Activated naive CD4-positive, alpha-beta T cell treated with anti-CD3 and anti-CD28 coated beads for 36 hours (primary cell): ENCODE measurements at regions of chr1 and their contacts with region 1.

Region 1: DNA sequence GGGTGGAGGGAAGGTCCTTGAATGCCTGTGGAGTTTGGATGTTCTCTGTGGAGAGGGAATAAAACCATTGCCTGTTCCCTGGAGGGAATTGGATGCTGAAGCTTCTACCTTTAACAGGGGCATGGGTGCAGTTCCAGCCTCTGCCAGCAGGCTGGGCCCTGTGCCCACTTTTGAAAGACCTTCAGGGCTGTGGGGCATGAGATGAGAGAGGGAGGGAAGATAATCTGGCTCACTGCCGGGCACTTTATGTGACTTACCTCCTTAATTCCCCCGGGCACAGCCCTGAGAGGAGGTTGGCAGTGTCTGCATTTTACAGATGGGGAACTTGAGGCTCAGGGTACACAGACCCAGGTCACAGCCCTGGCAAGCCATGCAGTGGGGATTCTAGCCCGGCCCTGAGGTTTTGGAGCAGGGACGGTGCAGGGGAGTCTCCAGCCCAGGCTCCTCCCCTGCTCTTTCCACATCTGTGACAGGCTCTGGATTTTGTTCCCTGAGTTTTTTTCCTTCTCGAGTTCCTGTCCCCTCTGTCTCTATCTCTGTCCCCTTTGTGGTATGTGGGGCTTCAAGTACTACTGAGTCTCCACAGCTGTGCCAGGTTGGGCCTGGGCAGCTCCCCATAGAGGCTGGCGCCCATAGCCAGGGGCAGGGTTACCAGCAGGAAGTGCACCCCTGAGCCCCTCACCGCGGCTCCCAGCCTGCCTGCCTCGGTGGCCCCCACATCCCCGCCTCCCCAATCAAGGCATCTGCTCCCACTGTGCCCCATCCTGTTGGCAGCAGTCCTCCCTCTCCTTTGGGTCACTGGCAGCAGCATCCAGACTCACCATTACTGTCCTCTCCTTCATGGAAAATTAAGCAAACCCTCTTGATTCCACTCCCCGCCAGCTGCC is 14.0 kb upstream of the THEMIS2 start:
- DNase-seq: peak; percentile 93
- H3K4me3 Mint-ChIP-seq: no peak overlapping the region
- H3K27ac Mint-ChIP-seq: no peak overlapping the region
- H3K4me1 Mint-ChIP-seq: peaks cover 14% of the 10 kb centered on the region
- H3K27me3 Mint-ChIP-seq: no peaks in the 10 kb centered on the region

Region 2: DNA sequence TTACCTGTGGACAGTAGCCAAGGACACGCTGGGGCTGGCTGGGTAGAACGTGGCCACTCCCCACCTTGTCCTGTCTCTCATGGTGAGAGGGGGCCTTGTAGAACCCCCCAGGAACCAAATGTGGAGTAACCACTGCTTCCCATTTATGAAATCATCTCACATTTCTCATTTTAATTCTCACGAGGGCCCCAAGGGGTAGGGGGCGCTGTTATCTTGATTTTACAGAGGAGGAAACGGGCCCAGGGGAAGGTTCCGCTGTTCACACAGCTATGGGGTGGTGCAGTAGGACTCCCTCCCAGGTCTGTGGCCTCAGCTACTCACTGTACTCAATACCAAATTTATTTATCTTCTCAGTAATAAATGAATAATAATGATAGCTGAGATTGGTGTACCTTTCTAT is 82.0 kb after region 1 on chr1:
- CTCF ChIA-PET with region 1: interaction called, 3 read pairs
- intact Hi-C with region 1: loop called (anchors 2 kb)
- DNase-seq: peak; percentile 90
- H3K4me3 Mint-ChIP-seq: no peak overlapping the region
- H3K27ac Mint-ChIP-seq: peak overlapping the region; percentile 15
- H3K4me1 Mint-ChIP-seq: peaks cover 26% of the 10 kb centered on the region
- H3K27me3 Mint-ChIP-seq: peaks cover 7% of the 10 kb centered on the region

Region 3: DNA sequence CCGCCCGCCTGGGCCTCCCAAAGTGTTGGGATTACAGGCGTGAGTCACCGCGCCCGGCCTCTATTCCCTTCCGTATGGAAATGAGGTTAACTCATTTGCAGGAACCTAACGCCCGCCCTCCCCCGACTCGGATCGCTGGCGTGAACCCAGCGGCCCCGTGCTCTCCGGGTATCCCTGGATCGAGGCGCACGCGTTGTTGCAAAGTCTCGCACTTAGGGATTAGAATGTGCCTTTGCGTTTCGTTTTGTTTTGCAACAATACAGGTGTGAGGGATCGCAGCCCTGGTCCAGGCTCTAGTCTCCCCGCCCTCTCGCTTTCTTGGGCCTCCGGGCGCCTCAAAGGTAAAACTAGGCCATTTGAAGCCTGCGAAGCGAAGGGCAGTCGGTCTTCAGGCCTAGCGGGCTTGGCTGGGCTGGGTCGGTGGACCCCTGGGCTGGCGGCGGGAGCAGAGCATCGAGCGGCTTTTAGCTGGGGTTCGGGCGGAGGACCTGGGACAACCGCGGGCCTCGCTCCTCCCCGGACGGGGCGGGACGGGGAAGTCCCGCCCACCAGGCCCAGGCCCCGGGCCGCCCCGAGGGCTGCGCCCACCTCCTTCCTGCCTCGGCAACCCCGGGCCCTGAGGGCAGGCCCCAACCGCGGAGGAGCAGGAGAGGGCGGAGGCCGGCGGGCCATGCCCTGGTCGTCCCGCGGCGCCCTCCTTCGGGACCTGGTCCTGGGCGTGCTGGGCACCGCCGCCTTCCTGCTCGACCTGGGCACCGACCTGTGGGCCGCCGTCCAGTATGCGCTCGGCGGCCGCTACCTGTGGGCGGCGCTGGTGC is 101.3 kb after region 1 on chr1 and contains the start of gene XKR8:
- CTCF ChIA-PET with region 1: no interaction called
- intact Hi-C with region 1: loop called (anchors 5 kb)
- DNase-seq: peak; percentile 79
- H3K4me3 Mint-ChIP-seq: peak within 1 kb of the TSS; percentile 72
- H3K27ac Mint-ChIP-seq: peak within 1 kb of the TSS; percentile 64
- H3K4me1 Mint-ChIP-seq: peaks cover 21% of the 10 kb centered on the region
- H3K27me3 Mint-ChIP-seq: no peaks in the 10 kb centered on the region
- total RNA-seq, gene XKR8: 3.2 to 4.8 TPM

Region 4: DNA sequence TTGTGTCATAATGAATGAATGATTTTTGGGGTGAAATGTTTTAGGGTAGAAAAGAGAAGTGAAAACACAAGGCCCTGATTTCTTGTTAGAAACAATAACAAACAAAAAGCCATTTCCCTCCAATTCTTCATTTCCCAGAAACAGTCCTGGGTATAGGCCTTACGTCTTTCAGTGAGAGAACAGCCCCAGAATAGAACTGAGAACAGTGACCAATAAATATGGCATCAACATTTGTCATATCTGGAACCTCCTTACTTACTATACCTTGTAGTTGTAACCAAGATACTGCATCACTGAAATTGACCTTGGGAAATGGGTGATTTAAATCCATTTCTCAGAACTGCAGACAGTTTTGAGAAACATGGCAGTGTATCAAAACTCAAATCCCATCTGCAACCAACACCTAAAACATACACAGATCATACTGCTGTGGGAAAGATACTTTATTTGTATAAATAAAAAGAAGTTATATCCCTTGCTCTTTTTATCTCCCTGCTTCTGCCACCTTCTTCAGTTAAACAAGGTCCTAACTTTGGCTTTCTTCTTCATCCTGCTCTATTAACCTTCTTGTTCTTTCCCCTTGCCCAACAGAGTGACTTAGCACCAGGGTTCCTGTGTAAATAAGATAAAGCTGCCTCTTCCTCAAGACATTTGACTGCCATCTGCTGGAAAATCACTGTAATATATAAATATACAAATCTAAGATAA is 121.0 kb after region 1 on chr1:
- CTCF ChIA-PET with region 1: interaction called, 23 read pairs
- intact Hi-C with region 1: loop called (anchors 1 kb)
- DNase-seq: no peak
- H3K4me3 Mint-ChIP-seq: no peak overlapping the region
- H3K27ac Mint-ChIP-seq: no peak overlapping the region
- H3K4me1 Mint-ChIP-seq: no peaks in the 10 kb centered on the region
- H3K27me3 Mint-ChIP-seq: no peaks in the 10 kb centered on the region

Region 5: GRCh38 chr1:28199328-28200233 is 341.3 kb after region 1 on chr1:
- CTCF ChIA-PET with region 1: no interaction called
- intact Hi-C with region 1: loop called (anchors 1 kb)
- DNase-seq: peak; percentile 75
- H3K4me3 Mint-ChIP-seq: peak overlapping the region; percentile 31
- H3K27ac Mint-ChIP-seq: peak overlapping the region; percentile 90
- H3K4me1 Mint-ChIP-seq: peaks cover 42% of the 10 kb centered on the region
- H3K27me3 Mint-ChIP-seq: no peaks in the 10 kb centered on the region

Region 6: DNA sequence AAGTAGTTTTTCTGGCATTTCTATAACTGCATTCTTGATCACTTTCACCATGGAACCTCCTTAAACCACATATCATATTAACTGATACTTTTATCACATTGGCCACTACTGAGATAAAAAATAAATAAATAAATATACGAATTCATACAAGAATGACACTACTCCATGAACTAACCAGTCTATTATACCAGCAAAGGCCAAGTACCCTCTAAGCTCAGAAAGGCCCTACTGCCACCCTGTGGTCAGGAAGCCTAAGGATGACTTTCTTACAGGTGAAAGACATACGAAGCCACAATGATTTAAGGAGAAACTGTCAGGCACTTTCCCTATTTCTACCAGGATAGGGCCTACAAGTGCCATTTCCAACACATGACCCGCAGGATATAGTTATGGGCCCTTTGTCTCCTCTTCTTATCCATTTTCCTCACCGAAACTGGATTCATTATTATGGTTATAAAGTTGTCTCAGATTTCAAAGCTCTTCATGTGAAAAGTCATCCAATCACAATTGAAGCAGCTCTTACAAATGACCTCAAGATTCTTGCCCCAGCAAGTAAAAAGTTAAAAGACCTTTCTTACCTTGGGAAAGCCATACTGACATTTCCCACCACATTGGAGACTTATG is 350.6 kb after region 1 on chr1:
- CTCF ChIA-PET with region 1: no interaction called
- intact Hi-C with region 1: loop called (anchors 1 kb)
- DNase-seq: peak; percentile 82
- H3K4me3 Mint-ChIP-seq: no peak overlapping the region
- H3K27ac Mint-ChIP-seq: no peak overlapping the region
- H3K4me1 Mint-ChIP-seq: peaks cover 2% of the 10 kb centered on the region
- H3K27me3 Mint-ChIP-seq: no peaks in the 10 kb centered on the region